ENCODE measurements at regions of chr4 and their contacts with region 1.

Region 1: GRCh38 chr4:99847362-99847976 is 30.8 kb downstream of the DAPP1 start:
- DNase-seq: peak; percentile 50
- CTCF ChIP-seq: no peak

Region 2: GRCh38 chr4:99816545-99817308 is 30.7 kb before region 1 on chr4 and contains the start of gene DAPP1:
- CTCF ChIA-PET with region 1: interaction called, 13 read pairs
- POLR2A ChIA-PET with region 1: interaction called, 7 read pairs
- DNase-seq: peak; percentile 74
- CTCF ChIP-seq: no peak

Region 3: DNA sequence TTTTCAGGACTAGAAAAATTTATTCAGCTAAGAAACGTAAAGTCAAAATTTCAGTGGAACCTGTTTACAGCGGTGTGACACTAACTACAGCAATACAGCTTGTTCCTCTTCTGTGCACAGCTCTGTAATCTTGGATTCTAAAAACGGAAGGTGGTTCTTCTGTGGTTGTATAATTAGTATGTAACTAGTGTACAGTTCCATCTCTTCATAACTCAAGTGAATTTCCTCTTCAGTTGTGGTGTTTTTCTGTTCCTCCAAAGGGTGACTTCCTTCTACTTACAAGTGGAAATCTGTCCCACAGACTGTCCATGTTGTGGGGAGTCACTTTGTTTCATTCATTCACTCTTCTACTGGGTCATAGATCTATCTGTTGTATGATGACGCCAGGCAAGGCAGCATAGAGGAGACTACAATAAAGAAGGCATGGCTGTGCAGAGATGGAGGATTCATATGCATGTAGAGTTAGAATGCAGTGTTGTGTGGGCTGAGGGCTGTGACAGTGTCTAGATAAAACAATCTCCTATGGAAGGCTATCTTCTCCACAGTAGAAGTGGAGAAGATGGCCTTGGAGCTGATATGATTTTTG is 25.5 kb before region 1 on chr4:
- CTCF ChIA-PET with region 1: interaction called, 13 read pairs
- POLR2A ChIA-PET with region 1: interaction called, 7 read pairs
- DNase-seq: no peak
- CTCF ChIP-seq: no peak

Region 4: GRCh38 chr4:99879458-99879857 is 32.0 kb after region 1 on chr4:
- CTCF ChIA-PET with region 1: no interaction called
- POLR2A ChIA-PET with region 1: no interaction called
- DNase-seq: no peak
- CTCF ChIP-seq: no peak

Region 5: DNA sequence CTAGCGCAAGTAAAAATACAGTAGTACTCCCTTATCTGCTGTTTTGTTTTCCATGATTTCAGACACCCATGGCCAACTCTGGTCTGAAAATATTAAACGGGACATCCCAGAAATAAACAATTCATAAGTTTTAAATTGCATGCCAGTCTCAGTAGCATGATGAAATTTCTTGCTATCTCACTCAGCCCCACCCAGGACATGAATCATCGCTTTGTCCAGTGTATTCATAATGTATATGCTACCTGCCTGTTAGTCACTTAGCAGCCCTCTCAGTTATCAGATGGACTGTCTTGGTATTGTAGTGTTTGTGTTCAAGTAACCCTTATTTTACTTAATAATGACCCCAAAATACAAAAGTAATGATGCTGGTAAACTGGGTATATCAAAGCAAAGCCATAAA is 501.0 kb after region 1 on chr4:
- CTCF ChIA-PET with region 1: no interaction called
- POLR2A ChIA-PET with region 1: no interaction called
- DNase-seq: no peak
- CTCF ChIP-seq: no peak